Activated T-helper 1 cell treated with anti-CD3 and anti-CD28 coated beads, Interleukin-12 subunit alpha, Interleukin-12 subunit beta, Interleukin-2, Interleukin-4 antibody, amounts not matched to agents 30 ng/mL and 10 ng/mL and 1 ng/mL, durations not matched to agents 14 hours and 24 hours and 36 hours (primary cell): ENCODE measurements at regions of chr4 and their contacts with region 1.

Region 1: DNA sequence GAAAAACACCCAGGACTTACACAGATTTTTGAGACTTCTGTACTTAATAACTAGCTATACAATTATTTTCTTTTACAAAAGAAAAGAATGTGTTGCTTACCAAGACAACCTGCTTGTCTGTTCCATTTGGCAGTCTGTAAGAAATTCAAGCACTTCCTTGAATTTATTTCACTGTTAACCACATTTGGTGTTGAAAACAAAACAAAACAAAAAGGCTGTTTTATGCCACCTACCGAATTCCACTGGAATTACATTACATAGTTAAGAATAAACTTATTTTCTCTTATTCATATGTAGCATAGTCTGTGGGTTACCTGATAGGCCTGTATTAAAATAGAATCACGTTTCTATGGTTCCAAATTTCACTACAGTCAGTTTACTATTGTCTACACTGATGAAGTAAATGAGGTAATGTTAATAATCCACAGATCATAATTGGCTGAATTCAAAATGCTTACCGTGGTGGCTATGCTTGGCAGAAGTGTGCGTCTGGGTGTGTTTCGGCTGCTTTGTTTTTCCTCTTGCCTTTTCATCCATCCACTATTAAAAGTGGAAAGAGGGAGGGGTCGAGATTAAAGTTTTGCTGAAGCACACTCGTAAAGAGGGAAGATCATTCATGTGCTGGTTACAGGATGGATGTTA is at the start of gene TLR1:
- DNase-seq: no peak
- H3K4me3 Mint-ChIP-seq: peak within 1 kb of the TSS; percentile 81
- H3K27ac Mint-ChIP-seq: peak within 1 kb of the TSS; percentile 87
- H3K4me1 Mint-ChIP-seq: peaks cover 38% of the 10 kb centered on the region
- H3K27me3 Mint-ChIP-seq: no peaks in the 10 kb centered on the region
- total RNA-seq, gene TLR1: 1.9 and 2.7 TPM in 2 replicates

Region 2: DNA sequence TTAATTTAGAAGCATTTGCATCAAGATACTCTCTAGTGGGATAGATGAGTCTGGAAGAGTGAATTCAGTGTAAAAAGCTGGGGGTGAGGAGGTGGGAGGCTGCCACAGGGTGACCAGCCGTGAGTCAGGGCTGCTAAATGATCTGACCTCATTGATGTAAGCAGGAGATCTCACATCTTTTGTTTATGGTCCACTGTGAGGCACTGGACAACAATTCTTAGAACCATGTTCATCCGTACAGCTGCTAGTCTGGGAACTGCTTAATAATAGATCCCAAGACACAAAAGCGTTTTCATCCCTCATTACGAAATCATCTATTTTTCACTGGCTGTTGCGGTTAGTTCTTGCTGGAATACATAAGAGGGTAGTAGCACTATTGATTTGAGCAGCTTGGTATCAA is 126.7 kb before region 1 on chr4:
- intact Hi-C with region 1: no loop called
- DNase-seq: no peak
- H3K4me3 Mint-ChIP-seq: no peak overlapping the region
- H3K27ac Mint-ChIP-seq: no peak overlapping the region
- H3K4me1 Mint-ChIP-seq: peaks cover 55% of the 10 kb centered on the region
- H3K27me3 Mint-ChIP-seq: no peaks in the 10 kb centered on the region

Region 3: GRCh38 chr4:38759113-38759789 is 45.5 kb before region 1 on chr4:
- intact Hi-C with region 1: loop called (anchors 1 kb)
- DNase-seq: peak; percentile 34
- H3K4me3 Mint-ChIP-seq: no peak overlapping the region
- H3K27ac Mint-ChIP-seq: no peak overlapping the region
- H3K4me1 Mint-ChIP-seq: peaks cover 29% of the 10 kb centered on the region
- H3K27me3 Mint-ChIP-seq: no peaks in the 10 kb centered on the region

Region 4: DNA sequence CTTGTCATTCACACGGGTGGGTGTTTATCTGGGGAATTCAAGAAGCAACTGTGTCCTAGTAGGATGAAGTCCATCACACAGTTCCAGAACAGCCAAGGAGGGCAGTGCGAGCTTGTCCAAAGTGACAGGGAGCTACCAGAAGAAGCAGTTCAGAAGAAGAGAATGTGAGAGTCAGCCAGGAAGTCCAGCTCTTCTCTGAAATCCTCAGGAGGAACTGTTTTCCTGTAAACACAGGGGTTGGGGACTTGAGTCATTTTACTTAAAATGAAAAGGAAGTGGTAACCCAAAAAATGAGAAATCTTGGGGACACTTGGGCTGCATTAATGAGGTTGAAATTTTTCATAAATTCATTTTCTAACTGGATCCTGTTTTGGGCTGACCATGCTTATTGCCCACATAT is 13.8 kb before region 1 on chr4:
- intact Hi-C with region 1: loop called (anchors 1 kb)
- DNase-seq: no peak
- H3K4me3 Mint-ChIP-seq: peak overlapping the region; percentile 11
- H3K27ac Mint-ChIP-seq: peak overlapping the region; percentile 82
- H3K4me1 Mint-ChIP-seq: peaks cover 24% of the 10 kb centered on the region
- H3K27me3 Mint-ChIP-seq: no peaks in the 10 kb centered on the region

Region 5: DNA sequence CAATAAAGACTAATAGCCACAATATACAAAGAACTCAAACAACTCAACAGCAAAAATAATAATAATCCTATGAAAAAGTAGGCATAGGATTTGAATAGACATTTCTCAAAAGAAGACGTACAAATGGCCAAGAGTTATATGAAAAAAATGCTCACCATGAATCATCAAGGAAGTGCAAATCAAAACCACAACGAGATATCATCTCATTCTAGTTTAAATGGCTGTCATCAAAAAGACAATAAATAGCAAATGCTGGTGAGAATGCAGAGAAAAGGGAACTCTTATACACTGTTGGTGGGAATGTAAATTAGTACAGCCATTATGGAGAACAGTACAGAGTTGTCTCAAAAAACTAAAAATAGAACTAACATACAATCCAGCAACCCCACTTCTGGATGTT is 33.1 kb after region 1 on chr4:
- intact Hi-C with region 1: loop called (anchors 1 kb)
- DNase-seq: no peak
- H3K4me3 Mint-ChIP-seq: no peak overlapping the region
- H3K27ac Mint-ChIP-seq: no peak overlapping the region
- H3K4me1 Mint-ChIP-seq: peaks cover 16% of the 10 kb centered on the region
- H3K27me3 Mint-ChIP-seq: no peaks in the 10 kb centered on the region

Region 6: GRCh38 chr4:39134683-39135319 is 330.0 kb after region 1 on chr4:
- intact Hi-C with region 1: loop called (anchors 1 kb)
- DNase-seq: no peak
- H3K4me3 Mint-ChIP-seq: no peak overlapping the region
- H3K27ac Mint-ChIP-seq: no peak overlapping the region
- H3K4me1 Mint-ChIP-seq: peaks cover 19% of the 10 kb centered on the region
- H3K27me3 Mint-ChIP-seq: no peaks in the 10 kb centered on the region